MCF 10A (cell line): ENCODE measurements at regions of chr13 and their contacts with region 1.

Region 1: GRCh38 chr13:47794963-47795362 is 206.1 kb downstream of the SUCLA2 start:
- DNase-seq: peak; percentile 42
- H3K4me3 Mint-ChIP-seq: no peak overlapping the region
- H3K27ac Mint-ChIP-seq: no peak overlapping the region
- H3K4me1 Mint-ChIP-seq: no peaks in the 10 kb centered on the region
- H3K27me3 Mint-ChIP-seq: no peaks in the 10 kb centered on the region
- CTCF ChIP-seq: peak; percentile 38

Region 2: DNA sequence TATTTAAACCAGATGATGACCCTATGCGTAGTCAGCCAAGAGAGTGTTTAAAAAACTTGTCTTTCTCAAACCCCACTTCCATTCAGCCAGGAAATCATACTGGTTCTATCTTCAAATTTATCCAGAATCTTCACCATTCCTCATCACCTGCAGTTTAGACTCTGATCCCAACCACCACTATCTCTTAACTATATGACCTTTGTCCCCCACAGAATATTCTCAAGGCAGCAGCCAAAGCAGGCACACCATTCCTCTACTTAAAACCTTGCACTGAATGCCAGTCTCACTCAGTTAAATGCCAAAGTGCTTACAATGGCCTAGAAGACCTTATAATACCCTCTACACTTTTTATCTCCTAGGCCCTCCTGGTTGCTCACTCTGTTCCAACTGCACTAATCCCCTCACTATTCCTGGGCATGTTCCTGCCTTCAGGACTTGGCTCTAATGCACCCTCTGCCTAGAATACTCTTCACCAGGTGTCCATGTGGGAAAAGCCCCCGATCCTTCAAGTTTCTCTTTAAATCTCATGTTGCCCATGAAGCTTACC is 196.0 kb after region 1 on chr13:
- CTCF ChIA-PET with region 1: no interaction called
- POLR2A ChIA-PET with region 1: no interaction called
- intact Hi-C with region 1: loop called (anchors 5 kb)
- DNase-seq: no peak
- H3K4me3 Mint-ChIP-seq: no peak overlapping the region
- H3K27ac Mint-ChIP-seq: peak overlapping the region; percentile 65
- H3K4me1 Mint-ChIP-seq: peaks cover 5% of the 10 kb centered on the region
- H3K27me3 Mint-ChIP-seq: no peaks in the 10 kb centered on the region
- CTCF ChIP-seq: no peak